Activated T-helper 1 cell treated with anti-CD3 and anti-CD28 coated beads, Interleukin-12 subunit alpha, Interleukin-12 subunit beta, Interleukin-2, Interleukin-4 antibody, amounts not matched to agents 30 ng/mL and 10 ng/mL and 1 ng/mL, durations not matched to agents 14 hours and 24 hours and 36 hours (primary cell): ENCODE measurements at regions of chr9 and their contacts with region 1.

Region 1: GRCh38 chr9:99851500-99851822 is 29.8 kb downstream of the NR4A3 start:
- DNase-seq: peak; percentile 64
- H3K4me3 Mint-ChIP-seq: peak overlapping the region; percentile 38
- H3K27ac Mint-ChIP-seq: peak overlapping the region; percentile 77
- H3K4me1 Mint-ChIP-seq: peaks cover 62% of the 10 kb centered on the region
- H3K27me3 Mint-ChIP-seq: peaks cover 4% of the 10 kb centered on the region

Region 2: DNA sequence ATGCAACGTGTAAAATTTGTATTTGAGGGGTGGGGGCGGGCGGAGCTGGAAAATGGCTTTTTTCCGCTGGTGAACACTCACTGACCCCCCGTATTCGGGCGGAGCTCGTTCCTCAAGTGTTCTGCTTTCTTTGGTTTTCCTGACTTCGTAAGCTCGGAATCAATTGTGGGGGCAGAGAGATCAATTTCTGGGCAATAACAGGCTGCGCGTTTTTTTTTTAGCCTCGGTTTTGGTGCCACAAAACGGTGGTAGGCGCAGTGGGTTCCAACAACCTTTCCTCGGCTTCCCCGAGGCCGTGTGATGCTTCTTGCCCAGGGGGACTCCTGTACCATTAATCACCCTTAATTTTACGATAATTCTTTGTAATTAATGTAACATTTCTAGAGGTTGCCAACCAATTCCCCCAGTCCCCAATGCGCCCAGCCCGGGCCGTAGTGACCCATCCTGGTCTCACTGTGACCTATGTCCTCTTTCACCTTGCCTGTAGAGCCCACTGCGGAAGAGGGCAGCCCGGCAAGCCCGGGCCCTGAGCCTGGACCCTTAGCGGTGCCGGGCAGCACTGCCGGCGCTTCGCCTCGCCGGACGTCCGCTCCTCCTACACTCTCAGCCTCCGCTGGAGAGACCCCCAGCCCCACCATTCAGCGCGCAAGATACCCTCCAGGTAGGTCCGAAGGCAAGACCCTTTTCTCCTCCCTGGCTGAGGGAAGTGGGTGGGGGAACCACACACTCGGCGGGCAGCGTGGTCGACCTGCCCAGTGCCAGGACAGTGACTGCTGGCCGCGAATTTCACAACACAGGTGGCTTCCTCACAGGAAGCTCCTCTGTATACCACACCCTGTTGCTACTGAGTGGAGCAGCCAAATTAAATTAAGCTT is 26.1 kb before region 1 on chr9:
- intact Hi-C with region 1: loop called (anchors 2 kb)
- DNase-seq: no peak
- H3K4me3 Mint-ChIP-seq: peak overlapping the region; percentile 97
- H3K27ac Mint-ChIP-seq: peak overlapping the region; percentile 48
- H3K4me1 Mint-ChIP-seq: peaks cover 78% of the 10 kb centered on the region
- H3K27me3 Mint-ChIP-seq: peaks cover 25% of the 10 kb centered on the region

Region 3: GRCh38 chr9:99868845-99869244 is 17.4 kb after region 1 on chr9:
- intact Hi-C with region 1: loop called (anchors 2 kb)
- DNase-seq: no peak
- H3K4me3 Mint-ChIP-seq: no peak overlapping the region
- H3K27ac Mint-ChIP-seq: peak overlapping the region; percentile 55
- H3K4me1 Mint-ChIP-seq: peaks cover 45% of the 10 kb centered on the region
- H3K27me3 Mint-ChIP-seq: no peaks in the 10 kb centered on the region

Region 4: DNA sequence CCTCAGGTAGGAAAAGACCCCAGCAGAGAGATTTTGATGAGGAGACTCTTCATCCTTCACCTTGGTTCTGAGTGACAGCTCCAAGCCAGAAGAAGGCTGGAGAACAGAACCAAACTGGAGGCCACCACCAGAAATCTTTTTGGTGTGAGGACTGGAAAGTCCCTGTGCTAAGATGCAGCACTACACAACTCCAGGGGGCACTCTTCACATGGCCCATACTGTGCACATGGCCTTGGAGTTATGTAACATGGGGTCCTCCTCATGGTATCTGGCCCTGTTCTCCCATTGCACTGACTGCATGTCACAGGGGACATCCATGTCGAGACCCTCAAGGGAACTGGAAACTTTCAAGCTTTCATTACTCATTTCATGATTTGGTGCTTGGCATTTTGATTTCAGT is 37.7 kb after region 1 on chr9:
- intact Hi-C with region 1: no loop called
- DNase-seq: no peak
- H3K4me3 Mint-ChIP-seq: no peak overlapping the region
- H3K27ac Mint-ChIP-seq: no peak overlapping the region
- H3K4me1 Mint-ChIP-seq: peaks cover 3% of the 10 kb centered on the region
- H3K27me3 Mint-ChIP-seq: peaks cover 16% of the 10 kb centered on the region